Caco-2 (cell line): ENCODE measurements at regions of chrX and their contacts with region 1.

Region 1: GRCh38 chrX:119693040-119693995 is at the start of gene SEPTIN6:
- DNase-seq: peak; percentile 63 to 68
- H3K4me3 ChIP-seq: peak within 1 kb of the TSS; percentile 64
- H3K4me3 Mint-ChIP-seq: peak within 1 kb of the TSS; percentile 89
- H3K27ac Mint-ChIP-seq: peak within 1 kb of the TSS; percentile 59
- H3K4me1 ChIP-seq: no peaks in the 10 kb centered on the region
- H3K4me1 Mint-ChIP-seq: no peaks in the 10 kb centered on the region
- H3K27me3 ChIP-seq: no peaks in the 10 kb centered on the region
- H3K27me3 Mint-ChIP-seq: no peaks in the 10 kb centered on the region
- CTCF ChIP-seq: no peak
- total RNA-seq, gene SEPTIN6: 11.1 and 12.1 TPM in 2 replicates

Region 2: DNA sequence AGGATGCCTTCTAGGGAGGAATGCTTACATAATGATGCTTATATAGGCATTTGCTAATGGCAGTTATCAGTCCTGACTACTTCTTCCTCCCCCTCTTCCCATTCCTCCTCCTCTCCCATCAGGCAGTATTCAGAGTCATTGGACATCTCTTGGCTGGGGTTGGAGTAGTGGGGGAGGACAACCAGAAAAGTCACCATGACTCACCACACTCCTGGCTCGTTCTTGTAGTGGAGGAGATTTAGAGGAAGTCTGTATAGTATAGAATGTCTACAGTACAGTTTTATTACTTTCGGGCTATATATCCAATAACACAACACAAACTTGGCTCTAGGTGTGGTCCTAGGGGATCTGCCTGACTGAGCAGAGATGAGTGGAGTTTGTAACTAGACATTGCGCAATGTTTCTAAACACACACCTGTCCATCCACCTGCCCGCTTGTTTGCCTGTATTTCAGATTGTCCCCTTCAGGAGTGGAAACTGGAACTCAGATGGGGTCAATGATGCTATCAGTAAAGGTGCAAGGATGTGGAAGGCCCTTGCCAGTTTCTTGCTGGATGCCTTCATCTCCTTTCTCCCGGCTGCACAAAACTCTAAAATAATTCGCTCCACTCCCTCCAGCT is 537.8 kb before region 1 on chrX:
- CTCF ChIA-PET with region 1: no interaction called
- POLR2A ChIA-PET with region 1: no interaction called
- intact Hi-C with region 1: no loop called
- DNase-seq: no peak
- H3K4me3 ChIP-seq: no peak overlapping the region
- H3K4me3 Mint-ChIP-seq: no peak overlapping the region
- H3K27ac Mint-ChIP-seq: no peak overlapping the region
- H3K4me1 ChIP-seq: no peaks in the 10 kb centered on the region
- H3K4me1 Mint-ChIP-seq: no peaks in the 10 kb centered on the region
- H3K27me3 ChIP-seq: no peaks in the 10 kb centered on the region
- H3K27me3 Mint-ChIP-seq: no peaks in the 10 kb centered on the region
- CTCF ChIP-seq: no peak

Region 3: GRCh38 chrX:119606280-119607015 is 86.9 kb before region 1 on chrX and contains the start of gene NKRF:
- CTCF ChIA-PET with region 1: interaction called, 7 read pairs
- POLR2A ChIA-PET with region 1: interaction called, 10 read pairs
- intact Hi-C with region 1: loop called (anchors 5 kb)
- DNase-seq: peak; percentile 90 to 91
- H3K4me3 ChIP-seq: peak within 1 kb of the TSS; percentile 95
- H3K4me3 Mint-ChIP-seq: peak within 1 kb of the TSS; percentile 94
- H3K27ac Mint-ChIP-seq: peak within 1 kb of the TSS; percentile 94
- H3K4me1 ChIP-seq: no peaks in the 10 kb centered on the region
- H3K4me1 Mint-ChIP-seq: no peaks in the 10 kb centered on the region
- H3K27me3 ChIP-seq: no peaks in the 10 kb centered on the region
- H3K27me3 Mint-ChIP-seq: no peaks in the 10 kb centered on the region
- CTCF ChIP-seq: no peak
- total RNA-seq, gene NKRF: 14.4 and 16.6 TPM in 2 replicates

Region 4: GRCh38 chrX:119614776-119615175 is 78.5 kb before region 1 on chrX:
- CTCF ChIA-PET with region 1: no interaction called
- POLR2A ChIA-PET with region 1: no interaction called
- intact Hi-C with region 1: loop called (anchors 5 kb)
- DNase-seq: no peak
- H3K4me3 ChIP-seq: no peak overlapping the region
- H3K4me3 Mint-ChIP-seq: no peak overlapping the region
- H3K27ac Mint-ChIP-seq: no peak overlapping the region
- H3K4me1 ChIP-seq: no peaks in the 10 kb centered on the region
- H3K4me1 Mint-ChIP-seq: no peaks in the 10 kb centered on the region
- H3K27me3 ChIP-seq: no peaks in the 10 kb centered on the region
- H3K27me3 Mint-ChIP-seq: no peaks in the 10 kb centered on the region
- CTCF ChIP-seq: no peak